HepG2 (cell line): ENCODE measurements at regions of chr1 and their contacts with region 1.

Region 1: DNA sequence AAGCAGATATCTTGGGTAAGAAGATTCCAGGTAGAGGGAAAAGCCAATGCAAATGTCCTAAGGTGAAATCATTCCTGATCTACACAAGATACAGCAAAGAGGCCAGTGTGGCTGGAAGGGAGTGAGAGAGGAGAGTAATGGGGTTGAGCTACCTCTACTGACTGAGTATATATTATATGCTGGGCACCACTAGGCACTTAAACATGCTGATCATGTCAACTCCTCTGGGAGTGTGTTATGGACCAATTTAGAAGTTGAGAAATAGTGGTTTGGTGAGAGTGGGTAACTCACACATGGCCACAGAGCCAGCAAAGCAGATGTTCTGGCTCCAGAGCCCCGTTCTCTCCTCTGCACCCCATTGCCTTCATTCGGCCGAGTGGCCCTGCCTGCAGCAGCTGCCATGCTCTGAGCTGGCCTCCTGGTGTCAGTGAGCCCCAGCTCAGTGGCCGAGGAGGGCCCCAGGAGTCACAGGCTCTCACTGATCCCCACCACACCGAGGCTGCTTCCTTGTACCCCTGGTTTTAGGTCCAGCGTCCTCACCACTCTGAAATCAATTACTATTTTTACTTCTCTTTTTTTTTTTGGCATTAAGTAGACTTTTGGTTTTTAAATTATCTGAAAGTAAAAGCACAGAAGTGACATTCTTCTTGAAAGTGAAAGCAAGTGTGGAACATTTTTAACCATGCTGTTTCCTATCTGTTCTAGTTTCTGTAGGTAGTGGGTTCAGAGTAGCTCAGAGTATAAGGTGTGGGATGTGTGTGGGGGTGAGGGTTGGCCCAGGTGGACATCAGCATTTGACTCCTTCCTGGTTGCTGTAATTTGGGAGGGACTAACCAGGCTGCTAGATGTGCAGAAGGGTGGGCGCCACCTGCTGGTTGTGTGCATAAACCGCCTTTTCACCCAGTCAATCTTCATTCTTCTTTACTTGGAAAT is 45.8 kb upstream of the CRNN start:
- DNase-seq: peak; percentile 51
- ATAC-seq: peak; percentile 95
- H3K4me3 ChIP-seq: peak overlapping the region; percentile 37 to 40 (median 40); a peak in 5 of 6 replicates
- H3K27ac ChIP-seq: no peak overlapping the region
- H3K4me1 ChIP-seq: no peaks in the 10 kb centered on the region
- H3K27me3 ChIP-seq: no peaks in the 10 kb centered on the region
- CTCF ChIP-seq: peak; percentile 72
- EP300 ChIP-seq: no peak
- POLR2A ChIP-seq: no peak
- RAD21 ChIP-seq: no peak

Region 2: GRCh38 chr1:152141974-152142584 is 317.8 kb before region 1 on chr1:
- CTCF ChIA-PET with region 1: interaction called, 4 read pairs
- POLR2A ChIA-PET with region 1: no interaction called
- in situ Hi-C with region 1: no loop called
- intact Hi-C with region 1: loop called (anchors 5 kb)
- DNase-seq: peak; percentile 45
- ATAC-seq: peak; percentile 50; the same call in 2 of the 3 replicates
- H3K4me3 ChIP-seq: no peak overlapping the region
- H3K27ac ChIP-seq: no peak overlapping the region
- H3K4me1 ChIP-seq: no peaks in the 10 kb centered on the region
- H3K27me3 ChIP-seq: no peaks in the 10 kb centered on the region
- CTCF ChIP-seq: peak; percentile 68
- EP300 ChIP-seq: no peak
- POLR2A ChIP-seq: no peak
- RAD21 ChIP-seq: no peak

Region 3: GRCh38 chr1:152189657-152190442 is 270.0 kb before region 1 on chr1:
- CTCF ChIA-PET with region 1: interaction called, 19 read pairs
- POLR2A ChIA-PET with region 1: no interaction called
- in situ Hi-C with region 1: no loop called
- intact Hi-C with region 1: loop called (anchors 2 kb)
- DNase-seq: peak; percentile 31
- ATAC-seq: peak; percentile 68
- H3K4me3 ChIP-seq: no peak overlapping the region
- H3K27ac ChIP-seq: no peak overlapping the region
- H3K4me1 ChIP-seq: no peaks in the 10 kb centered on the region
- H3K27me3 ChIP-seq: no peaks in the 10 kb centered on the region; a peak in 1 of 5 replicates
- CTCF ChIP-seq: peak; percentile 66
- EP300 ChIP-seq: no peak
- POLR2A ChIP-seq: no peak
- RAD21 ChIP-seq: no peak

Region 4: DNA sequence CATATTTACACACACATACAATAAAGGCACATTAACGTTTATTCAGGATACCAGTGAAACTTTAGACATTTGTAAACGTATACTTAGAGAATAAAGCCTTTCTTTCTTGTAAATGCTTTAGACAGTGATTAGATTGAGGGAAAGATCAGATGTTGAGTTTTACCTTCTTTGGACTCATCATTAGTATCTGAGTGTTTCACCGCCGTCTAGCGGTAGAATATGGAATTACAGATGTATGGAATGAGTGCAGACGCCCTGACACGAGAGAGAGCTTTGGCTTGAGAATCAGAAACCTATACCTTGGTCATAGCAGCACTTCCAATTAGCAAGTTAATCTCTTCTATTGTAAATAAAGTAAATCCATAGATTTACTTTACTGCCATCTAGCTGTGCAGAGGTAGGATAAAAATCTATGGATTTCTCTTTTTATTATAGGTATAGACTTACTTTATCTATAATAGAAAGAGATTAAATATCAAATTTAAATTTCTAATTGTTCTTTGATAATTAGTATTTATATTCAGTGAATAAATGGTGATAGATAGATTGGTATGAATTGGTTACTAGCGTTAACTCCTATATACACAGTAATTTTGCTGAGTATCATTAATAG is 112.6 kb before region 1 on chr1:
- CTCF ChIA-PET with region 1: no interaction called
- POLR2A ChIA-PET with region 1: no interaction called
- in situ Hi-C with region 1: no loop called
- intact Hi-C with region 1: loop called (anchors 2 kb)
- DNase-seq: peak; percentile 50
- ATAC-seq: peak; percentile 46; the same call in 2 of the 3 replicates
- H3K4me3 ChIP-seq: no peak overlapping the region
- H3K27ac ChIP-seq: no peak overlapping the region
- H3K4me1 ChIP-seq: no peaks in the 10 kb centered on the region
- H3K27me3 ChIP-seq: no peaks in the 10 kb centered on the region
- CTCF ChIP-seq: peak; percentile 70
- EP300 ChIP-seq: no peak
- POLR2A ChIP-seq: no peak
- RAD21 ChIP-seq: no peak

Region 5: GRCh38 chr1:152398812-152399698 is 60.8 kb before region 1 on chr1:
- CTCF ChIA-PET with region 1: interaction called, 14 read pairs
- POLR2A ChIA-PET with region 1: no interaction called
- in situ Hi-C with region 1: no loop called
- intact Hi-C with region 1: loop called (anchors 1 kb)
- DNase-seq: peak; percentile 25
- ATAC-seq: peak; percentile 91
- H3K4me3 ChIP-seq: no peak overlapping the region
- H3K27ac ChIP-seq: no peak overlapping the region
- H3K4me1 ChIP-seq: no peaks in the 10 kb centered on the region
- H3K27me3 ChIP-seq: no peaks in the 10 kb centered on the region
- CTCF ChIP-seq: peak; percentile 55
- EP300 ChIP-seq: no peak
- POLR2A ChIP-seq: no peak
- RAD21 ChIP-seq: no peak

Region 6: GRCh38 chr1:152473887-152474537 is 14.2 kb after region 1 on chr1:
- CTCF ChIA-PET with region 1: no interaction called
- POLR2A ChIA-PET with region 1: no interaction called
- in situ Hi-C with region 1: no loop called
- intact Hi-C with region 1: no loop called
- DNase-seq: no peak
- ATAC-seq: no peak
- H3K4me3 ChIP-seq: no peak overlapping the region
- H3K27ac ChIP-seq: no peak overlapping the region
- H3K4me1 ChIP-seq: no peaks in the 10 kb centered on the region
- H3K27me3 ChIP-seq: no peaks in the 10 kb centered on the region
- CTCF ChIP-seq: no peak
- EP300 ChIP-seq: no peak
- POLR2A ChIP-seq: no peak
- RAD21 ChIP-seq: no peak

Region 7: GRCh38 chr1:152543820-152544219 is 84.0 kb after region 1 on chr1:
- CTCF ChIA-PET with region 1: no interaction called
- POLR2A ChIA-PET with region 1: no interaction called
- in situ Hi-C with region 1: no loop called
- intact Hi-C with region 1: no loop called
- DNase-seq: no peak
- ATAC-seq: no peak; the same call in 2 of the 3 replicates
- H3K4me3 ChIP-seq: no peak overlapping the region
- H3K27ac ChIP-seq: no peak overlapping the region
- H3K4me1 ChIP-seq: no peaks in the 10 kb centered on the region
- H3K27me3 ChIP-seq: no peaks in the 10 kb centered on the region
- CTCF ChIP-seq: no peak
- EP300 ChIP-seq: no peak
- POLR2A ChIP-seq: no peak
- RAD21 ChIP-seq: no peak